Tibial artery (tissue), 4 donors: ENCODE measurements at regions of chr2 and their contacts with region 1.

Region 1: DNA sequence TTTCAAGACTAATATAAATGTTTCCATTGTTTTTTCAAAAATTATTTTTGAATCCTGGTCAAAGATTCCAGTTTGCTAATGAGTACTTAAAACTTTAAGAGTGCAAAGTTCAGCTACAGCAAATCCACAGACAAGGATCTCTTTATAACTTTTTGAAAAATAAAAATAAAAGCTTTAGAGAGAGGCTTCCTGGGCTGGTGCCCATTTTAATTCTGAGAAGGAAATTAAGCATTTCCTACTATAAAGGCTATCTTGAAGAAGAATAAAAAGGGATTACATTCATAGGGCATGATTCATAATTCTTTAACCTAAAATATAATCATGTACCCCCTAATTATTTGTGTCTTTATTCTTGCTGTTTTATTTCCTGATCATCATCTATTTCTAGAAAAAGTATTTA is 38.2 kb downstream of the DNAJC10 start:
- DNase-seq: no peak
- H3K4me3 ChIP-seq: no peak overlapping the region
- H3K27ac ChIP-seq: no peak overlapping the region
- H3K4me1 ChIP-seq: no peaks in the 10 kb centered on the region
- H3K27me3 ChIP-seq: no peaks in the 10 kb centered on the region
- CTCF ChIP-seq: no peak

Region 2: DNA sequence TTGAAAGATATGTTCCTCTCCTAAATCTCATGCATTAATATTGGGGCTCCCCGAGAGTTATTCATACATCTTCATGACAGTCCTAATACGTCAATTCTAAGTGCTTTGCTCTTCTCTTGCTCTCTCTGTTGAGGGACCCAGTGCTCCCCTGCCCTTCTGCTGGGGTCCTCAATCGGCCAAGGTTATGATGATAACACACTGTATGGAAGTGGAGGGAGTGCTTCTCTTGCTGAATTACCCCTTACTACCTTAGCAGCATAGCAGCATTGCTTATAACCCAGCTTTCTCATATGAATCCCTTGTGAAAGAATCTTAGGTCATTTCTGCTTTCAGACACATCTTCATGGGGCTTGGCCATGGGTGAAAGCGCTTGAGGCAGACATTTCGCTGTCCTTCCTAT is 819.5 kb before region 1 on chr2:
- intact Hi-C with region 1: loop called (anchors 5 kb)
- DNase-seq: no peak
- H3K4me3 ChIP-seq: no peak overlapping the region
- H3K27ac ChIP-seq: no peak overlapping the region
- H3K4me1 ChIP-seq: no peaks in the 10 kb centered on the region
- H3K27me3 ChIP-seq: no peaks in the 10 kb centered on the region
- CTCF ChIP-seq: no peak

Region 3: DNA sequence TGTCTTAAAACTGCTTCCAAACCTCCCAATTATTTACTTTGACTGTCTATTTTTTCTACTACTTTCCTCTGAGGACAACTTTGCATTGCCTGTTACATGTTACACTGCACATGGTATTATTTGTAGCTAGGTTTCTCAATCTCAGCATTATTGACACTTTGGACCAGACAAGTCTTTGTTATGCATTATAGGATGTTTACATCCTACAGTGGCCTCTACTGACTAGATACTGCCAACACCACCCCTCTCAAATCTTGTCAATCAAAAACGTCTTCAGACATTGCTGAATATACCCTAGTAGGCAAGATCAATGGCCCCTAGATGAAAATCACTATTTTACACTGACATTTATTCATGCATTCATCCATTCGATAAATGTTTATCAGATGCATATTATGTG is 167.8 kb before region 1 on chr2:
- intact Hi-C with region 1: no loop called
- DNase-seq: no peak
- H3K4me3 ChIP-seq: no peak overlapping the region
- H3K27ac ChIP-seq: no peak overlapping the region
- H3K4me1 ChIP-seq: no peaks in the 10 kb centered on the region
- H3K27me3 ChIP-seq: no peaks in the 10 kb centered on the region
- CTCF ChIP-seq: no peak

Region 4: DNA sequence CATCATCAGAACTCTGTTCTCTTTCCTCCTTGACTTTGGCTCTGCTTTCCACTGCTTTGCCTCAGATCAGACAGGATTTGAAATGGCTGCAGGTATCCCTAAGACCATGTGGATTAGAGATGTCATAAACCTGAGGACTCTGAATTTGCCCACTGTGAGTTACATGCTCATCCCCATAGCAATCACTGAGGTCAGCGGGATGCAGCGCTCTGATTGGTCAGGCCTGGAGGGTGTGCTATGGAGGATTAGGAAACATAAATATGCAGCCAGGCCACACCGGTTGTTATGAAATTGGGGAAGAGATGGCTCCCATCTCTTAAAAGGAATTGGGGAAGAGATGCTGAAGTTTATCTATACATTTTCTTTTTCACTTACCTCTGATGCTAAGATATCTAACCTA is 111.9 kb before region 1 on chr2:
- intact Hi-C with region 1: no loop called
- DNase-seq: peak; percentile 57 to 65
- H3K4me3 ChIP-seq: no peak overlapping the region
- H3K27ac ChIP-seq: no peak overlapping the region
- H3K4me1 ChIP-seq: no peaks in the 10 kb centered on the region
- H3K27me3 ChIP-seq: no peaks in the 10 kb centered on the region
- CTCF ChIP-seq: no peak